Naive thymus-derived CD4-positive, alpha-beta T cell (primary cell): ENCODE measurements at regions of chr14 and their contacts with region 1.

Region 1: DNA sequence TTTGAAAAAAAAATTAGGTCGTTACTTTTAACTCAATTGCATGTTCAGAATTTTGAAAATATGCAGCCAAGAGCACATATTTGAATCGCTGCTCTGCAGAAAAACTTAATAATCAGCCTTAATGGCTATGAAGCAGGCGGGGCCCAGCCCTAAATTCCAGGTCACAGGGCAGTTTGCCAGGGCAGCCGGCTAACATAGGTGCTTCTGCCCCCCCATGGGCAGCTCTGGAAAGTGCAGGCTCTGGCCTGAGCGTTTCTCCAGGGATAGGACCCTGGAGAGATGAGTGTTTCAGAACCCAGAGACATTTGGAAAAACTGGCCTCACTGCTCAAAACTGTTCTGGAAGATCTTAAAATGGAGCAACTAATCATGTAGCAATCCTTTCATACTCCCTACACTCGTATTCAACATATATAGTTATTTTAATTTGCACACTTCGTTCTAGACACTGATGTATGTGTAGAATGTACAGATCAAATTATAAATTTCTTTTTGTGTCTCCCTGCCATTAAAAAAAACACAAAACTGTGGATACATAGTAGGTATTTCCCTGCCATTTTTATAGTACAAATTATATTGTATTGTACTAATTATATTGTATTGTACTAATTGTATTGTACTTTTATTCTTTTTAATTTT is 26.0 kb upstream of the PTGR2 start:
- DNase-seq: peak; percentile 51 to 76 (median 66)
- ATAC-seq: peak; percentile 96
- H3K4me3 ChIP-seq: no peak overlapping the region
- H3K4me3 Mint-ChIP-seq: no peak overlapping the region
- H3K27ac ChIP-seq: no peak overlapping the region
- H3K27ac Mint-ChIP-seq: no peak overlapping the region
- H3K4me1 ChIP-seq: no peaks in the 10 kb centered on the region
- H3K4me1 Mint-ChIP-seq: peaks cover 0 to 21% (median 0%) of the 10 kb centered on the region in 7 donors
- H3K27me3 ChIP-seq: no peaks in the 10 kb centered on the region
- H3K27me3 Mint-ChIP-seq: peaks cover 0 to 3% (median 0%) of the 10 kb centered on the region in 5 donors

Region 2: DNA sequence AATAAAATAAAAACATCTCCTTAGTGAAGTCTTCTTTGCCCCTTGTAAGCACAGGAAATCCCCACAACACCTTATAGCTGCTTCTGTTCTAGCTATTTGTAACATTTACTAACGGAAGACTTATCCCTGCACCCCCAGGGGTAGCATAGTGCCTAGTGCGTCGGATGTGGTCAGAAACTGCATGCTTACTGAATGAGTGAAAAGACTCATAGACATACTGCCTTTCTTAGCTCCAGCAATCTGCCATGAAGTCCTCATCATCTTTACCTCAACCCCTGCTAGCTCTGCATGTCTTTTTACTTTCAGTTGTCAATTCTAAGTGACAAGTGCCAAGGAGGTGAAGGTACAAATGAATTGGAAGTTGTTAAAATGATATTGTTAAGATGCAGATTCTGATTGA is 322.0 kb before region 1 on chr14:
- CTCF ChIA-PET with region 1: no interaction called
- POLR2A ChIA-PET with region 1: no interaction called
- intact Hi-C with region 1: loop called in 1 of 2 experiments (anchors 2 kb)
- DNase-seq: no peak
- ATAC-seq: peak; percentile 41
- H3K4me3 ChIP-seq: no peak overlapping the region
- H3K4me3 Mint-ChIP-seq: no peak overlapping the region
- H3K27ac ChIP-seq: no peak overlapping the region
- H3K27ac Mint-ChIP-seq: no peak overlapping the region
- H3K4me1 ChIP-seq: no peaks in the 10 kb centered on the region
- H3K4me1 Mint-ChIP-seq: peaks cover 0 to 5% (median 0%) of the 10 kb centered on the region in 7 donors
- H3K27me3 ChIP-seq: no peaks in the 10 kb centered on the region
- H3K27me3 Mint-ChIP-seq: no peaks in the 10 kb centered on the region

Region 3: DNA sequence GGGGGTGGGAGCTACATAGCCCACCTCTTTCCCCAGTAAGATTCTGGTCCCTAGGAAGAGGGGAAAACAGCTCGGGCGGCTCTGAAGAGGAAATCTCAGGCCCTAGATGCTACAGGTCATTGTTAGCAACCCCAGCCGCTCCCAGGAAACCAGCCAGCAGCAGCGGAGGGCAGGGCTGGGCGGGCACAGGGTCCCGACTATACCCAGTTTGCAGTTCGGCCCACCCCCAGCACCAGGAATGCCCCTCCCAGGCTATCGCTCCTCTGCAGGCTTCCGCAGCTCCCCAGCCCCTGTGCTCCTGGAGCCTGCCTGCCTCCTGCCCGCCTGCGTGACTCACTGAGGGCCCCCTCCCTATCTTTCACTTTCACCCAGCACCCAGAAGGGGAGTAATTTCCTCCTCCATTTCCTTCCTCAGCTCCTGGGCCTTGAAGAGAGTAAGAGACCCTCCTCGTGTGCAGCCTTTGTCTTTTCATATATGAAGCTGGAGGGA is 84.2 kb before region 1 on chr14:
- CTCF ChIA-PET with region 1: interaction called, 5 read pairs
- POLR2A ChIA-PET with region 1: interaction called, 3 read pairs
- intact Hi-C with region 1: loop called in 1 of 2 experiments (anchors 5 kb)
- DNase-seq: peak in 7 of 9 donors; percentile 54 to 75 (median 57)
- ATAC-seq: peak; percentile 78
- H3K4me3 ChIP-seq: peak overlapping the region; percentile 52
- H3K4me3 Mint-ChIP-seq: peak overlapping the region; percentile 66 to 95 (median 88)
- H3K27ac ChIP-seq: peak overlapping the region; percentile 72
- H3K27ac Mint-ChIP-seq: peak overlapping the region; percentile 77 to 99 (median 93)
- H3K4me1 ChIP-seq: peaks cover 65 to 69% of the 10 kb centered on the region in 2 donors
- H3K4me1 Mint-ChIP-seq: peaks cover 43 to 71% (median 67%) of the 10 kb centered on the region in 7 donors
- H3K27me3 ChIP-seq: no peaks in the 10 kb centered on the region
- H3K27me3 Mint-ChIP-seq: no peaks in the 10 kb centered on the region

Region 4: GRCh38 chr14:73753959-73754882 is 71.4 kb before region 1 on chr14:
- CTCF ChIA-PET with region 1: interaction called, 6 read pairs
- POLR2A ChIA-PET with region 1: interaction called, 7 read pairs
- intact Hi-C with region 1: loop called in 1 of 2 experiments (anchors 2 kb)
- DNase-seq: peak in 2 of 9 donors; percentile 29 to 45
- ATAC-seq: peak; percentile 53
- H3K4me3 ChIP-seq: peak overlapping the region; percentile 59
- H3K4me3 Mint-ChIP-seq: peak overlapping the region; percentile 83 to 97 (median 90)
- H3K27ac ChIP-seq: peak overlapping the region; percentile 86
- H3K27ac Mint-ChIP-seq: peak overlapping the region; percentile 84 to 99 (median 99)
- H3K4me1 ChIP-seq: peaks cover 85 to 86% of the 10 kb centered on the region in 2 donors
- H3K4me1 Mint-ChIP-seq: peaks cover 79 to 95% (median 93%) of the 10 kb centered on the region in 7 donors
- H3K27me3 ChIP-seq: no peaks in the 10 kb centered on the region
- H3K27me3 Mint-ChIP-seq: no peaks in the 10 kb centered on the region

Region 5: DNA sequence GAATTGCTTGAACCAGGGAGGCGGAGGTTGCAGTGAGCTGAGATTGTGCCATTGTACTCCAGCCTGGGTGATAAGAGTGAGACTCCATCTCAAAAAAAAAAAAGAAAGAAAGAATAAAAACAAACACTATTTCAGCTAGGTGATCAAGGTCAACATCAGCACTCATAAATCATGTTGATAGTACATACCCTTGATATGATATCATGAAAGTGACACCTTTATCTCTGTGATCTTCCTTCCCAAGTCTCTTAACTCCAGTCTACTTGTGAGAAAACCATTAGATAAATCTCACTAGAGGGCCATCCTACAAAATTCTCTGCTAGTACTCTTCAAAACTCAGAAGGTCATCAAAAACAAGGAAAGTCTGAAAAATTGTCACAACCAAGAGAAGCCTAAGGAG is 18.2 kb before region 1 on chr14:
- CTCF ChIA-PET with region 1: no interaction called
- POLR2A ChIA-PET with region 1: no interaction called
- intact Hi-C with region 1: no loop called
- DNase-seq: no peak
- ATAC-seq: no peak
- H3K4me3 ChIP-seq: no peak overlapping the region
- H3K4me3 Mint-ChIP-seq: no peak overlapping the region
- H3K27ac ChIP-seq: no peak overlapping the region
- H3K27ac Mint-ChIP-seq: no peak overlapping the region
- H3K4me1 ChIP-seq: no peaks in the 10 kb centered on the region
- H3K4me1 Mint-ChIP-seq: peaks cover 0 to 9% (median 6%) of the 10 kb centered on the region in 7 donors
- H3K27me3 ChIP-seq: no peaks in the 10 kb centered on the region
- H3K27me3 Mint-ChIP-seq: peaks cover 0 to 9% (median 5%) of the 10 kb centered on the region in 5 donors

Region 6: GRCh38 chr14:74038015-74038859 is 212.6 kb after region 1 on chr14:
- CTCF ChIA-PET with region 1: no interaction called
- POLR2A ChIA-PET with region 1: no interaction called
- intact Hi-C with region 1: loop called in 1 of 2 experiments (anchors 1 kb)
- DNase-seq: peak in 7 of 9 donors; percentile 19 to 63 (median 49)
- ATAC-seq: peak; percentile 65
- H3K4me3 ChIP-seq: no peak overlapping the region
- H3K4me3 Mint-ChIP-seq: no peak overlapping the region
- H3K27ac ChIP-seq: no peak overlapping the region
- H3K27ac Mint-ChIP-seq: peak overlapping the region in 1 of 9 donors; percentile 29
- H3K4me1 ChIP-seq: no peaks in the 10 kb centered on the region
- H3K4me1 Mint-ChIP-seq: no peaks in the 10 kb centered on the region
- H3K27me3 ChIP-seq: no peaks in the 10 kb centered on the region
- H3K27me3 Mint-ChIP-seq: no peaks in the 10 kb centered on the region

Region 7: DNA sequence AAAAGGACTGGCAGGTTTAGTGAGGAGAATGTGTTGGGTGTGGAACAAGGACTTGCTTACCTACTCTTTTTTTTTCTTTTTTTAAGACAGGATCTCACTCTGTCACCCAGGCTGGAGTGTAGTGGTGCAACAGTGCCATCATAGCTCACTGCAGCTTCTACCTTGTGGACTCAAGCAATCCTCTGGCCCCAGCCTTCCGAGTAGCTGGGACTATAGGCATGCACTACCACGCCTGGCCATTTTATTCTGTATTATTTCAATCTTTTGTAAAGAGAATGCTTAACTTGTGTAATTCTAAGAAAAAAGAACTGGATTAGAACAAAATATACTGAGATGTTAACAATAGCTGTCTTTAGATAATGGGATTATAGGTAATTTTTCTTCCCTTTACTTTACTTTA is 520.7 kb after region 1 on chr14:
- CTCF ChIA-PET with region 1: no interaction called
- POLR2A ChIA-PET with region 1: no interaction called
- intact Hi-C with region 1: no loop called
- DNase-seq: no peak
- ATAC-seq: no peak
- H3K4me3 ChIP-seq: no peak overlapping the region
- H3K4me3 Mint-ChIP-seq: no peak overlapping the region
- H3K27ac ChIP-seq: no peak overlapping the region
- H3K27ac Mint-ChIP-seq: no peak overlapping the region
- H3K4me1 ChIP-seq: no peaks in the 10 kb centered on the region
- H3K4me1 Mint-ChIP-seq: no peaks in the 10 kb centered on the region
- H3K27me3 ChIP-seq: no peaks in the 10 kb centered on the region
- H3K27me3 Mint-ChIP-seq: peaks cover 0 to 24% (median 0%) of the 10 kb centered on the region in 5 donors